PC-9 (cell line): ENCODE measurements at regions of chr10 and their contacts with region 1.

Region 1: DNA sequence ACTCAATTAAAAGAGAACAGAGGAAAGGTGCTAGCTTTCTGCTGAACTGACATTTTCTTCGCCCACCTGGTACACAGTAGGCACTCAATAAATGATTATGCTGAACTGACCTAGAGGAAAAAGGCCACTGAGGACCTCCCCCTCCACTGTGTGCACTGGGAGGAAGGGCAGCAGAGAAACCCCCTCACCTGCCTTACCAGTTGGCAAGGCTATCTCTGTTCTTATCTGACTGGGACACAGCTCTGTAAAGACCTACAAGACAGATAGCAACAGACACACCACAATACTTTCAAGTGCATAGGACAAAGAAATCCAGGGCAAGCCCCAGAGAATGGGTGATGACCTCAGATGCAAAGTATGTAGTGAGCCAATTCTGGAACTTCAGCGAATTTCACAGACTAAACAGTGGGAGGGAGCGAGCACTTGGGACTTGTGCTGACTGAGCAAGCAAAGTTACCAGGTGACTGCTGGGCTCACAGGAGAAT is 30.4 kb downstream of the PDLIM1 start:
- DNase-seq: peak; percentile 52 to 83
- H3K4me3 ChIP-seq: no peak overlapping the region
- H3K27ac ChIP-seq: peak overlapping the region; percentile 97
- H3K4me1 ChIP-seq: peaks cover 55% of the 10 kb centered on the region
- H3K27me3 ChIP-seq: no peaks in the 10 kb centered on the region
- CTCF ChIP-seq: no peak

Region 2: DNA sequence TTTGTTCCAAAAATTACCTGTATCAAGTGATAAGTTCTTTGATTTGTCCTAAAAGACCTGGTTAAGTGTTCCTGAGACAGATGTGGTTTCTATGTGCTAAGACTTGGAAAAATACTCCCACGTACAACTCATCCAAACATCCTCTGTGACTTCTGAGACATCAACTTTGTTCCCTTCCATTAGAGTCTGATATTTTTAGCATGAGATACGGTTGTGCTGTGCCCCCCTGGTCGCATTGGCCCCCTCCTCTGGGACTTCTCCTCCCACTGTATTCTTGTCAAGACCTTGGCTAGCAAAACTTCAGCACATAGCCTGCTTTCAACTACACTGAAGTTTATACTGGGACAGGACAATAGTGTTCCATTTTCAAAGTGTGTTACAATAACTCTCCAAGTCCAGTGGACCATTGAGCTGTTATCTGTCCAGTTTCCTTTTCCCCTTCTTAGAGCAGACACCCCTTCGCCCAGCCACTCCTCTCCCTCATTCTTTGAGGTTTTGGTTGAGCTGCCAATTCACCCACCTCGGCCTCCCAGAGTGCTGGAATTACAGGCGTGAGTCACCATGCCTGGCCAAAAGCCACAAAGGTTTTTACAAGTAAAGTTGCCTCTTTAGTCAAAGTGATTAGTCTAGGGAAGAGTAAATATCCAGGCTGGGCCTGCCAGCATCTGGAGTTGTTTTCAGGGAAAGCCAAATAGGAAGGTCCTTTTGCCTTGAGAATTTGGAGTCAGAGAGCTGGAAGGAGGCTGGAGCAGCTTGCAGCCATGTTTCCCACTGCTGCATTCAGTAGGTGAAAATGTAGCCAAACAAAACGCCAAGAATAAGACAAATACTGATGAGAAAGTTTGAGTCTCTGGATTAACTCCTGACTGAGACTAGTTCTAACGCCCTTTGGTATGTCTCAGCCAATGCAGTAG is 48.2 kb after region 1 on chr10:
- CTCF ChIA-PET with region 1: no interaction called
- POLR2A ChIA-PET with region 1: interaction called, 4 read pairs
- intact Hi-C with region 1: loop called (anchors 5 kb)
- DNase-seq: peak; percentile 83 to 90
- H3K4me3 ChIP-seq: no peak overlapping the region; the same call in 1 of the 2 replicates
- H3K27ac ChIP-seq: peak overlapping the region; percentile 64
- H3K4me1 ChIP-seq: peaks cover 34% of the 10 kb centered on the region
- H3K27me3 ChIP-seq: no peaks in the 10 kb centered on the region
- CTCF ChIP-seq: no peak

Region 3: GRCh38 chr10:95319239-95319638 is 58.8 kb after region 1 on chr10:
- CTCF ChIA-PET with region 1: no interaction called
- POLR2A ChIA-PET with region 1: no interaction called
- intact Hi-C with region 1: no loop called
- DNase-seq: no peak
- H3K4me3 ChIP-seq: no peak overlapping the region
- H3K27ac ChIP-seq: no peak overlapping the region
- H3K4me1 ChIP-seq: no peaks in the 10 kb centered on the region
- H3K27me3 ChIP-seq: no peaks in the 10 kb centered on the region
- CTCF ChIP-seq: no peak

Region 4: GRCh38 chr10:95346715-95347401 is 86.4 kb after region 1 on chr10:
- CTCF ChIA-PET with region 1: no interaction called
- POLR2A ChIA-PET with region 1: no interaction called
- intact Hi-C with region 1: loop called (anchors 5 kb)
- DNase-seq: peak in 1 of 2 experiments; percentile 85
- H3K4me3 ChIP-seq: no peak overlapping the region
- H3K27ac ChIP-seq: 0 out of 2 replicates have a peak overlapping the region, but pooled peaks have one; percentile 16
- H3K4me1 ChIP-seq: peaks cover 12% of the 10 kb centered on the region
- H3K27me3 ChIP-seq: no peaks in the 10 kb centered on the region
- CTCF ChIP-seq: no peak